ENCODE measurements at regions of chr19 and their contacts with region 1.

Region 1: GRCh38 chr19:37906869-37907734 is at the start of gene SIPA1L3:
- DNase-seq: peak; percentile 54
- H3K4me3 ChIP-seq: peak within 1 kb of the TSS; percentile 95
- CTCF ChIP-seq: no peak

Region 2: DNA sequence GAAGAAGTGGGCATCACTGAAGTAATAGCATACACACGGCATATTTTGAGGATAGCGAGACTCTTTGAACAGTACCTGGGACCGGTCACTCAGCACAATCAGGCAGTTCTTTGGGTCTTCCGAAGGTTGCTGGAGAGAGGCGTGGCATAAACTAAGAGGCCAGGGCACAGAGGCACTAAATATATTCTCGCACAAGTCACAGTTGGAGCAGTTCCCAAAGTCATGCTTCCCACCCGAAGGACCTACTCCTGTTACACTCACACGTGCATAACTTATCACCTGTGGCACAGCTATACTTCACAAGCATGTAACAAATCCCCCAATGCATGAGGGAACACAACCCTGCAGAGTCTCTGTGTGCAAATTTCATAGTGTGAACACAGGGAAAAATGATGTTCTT is 10.9 kb before region 1 on chr19:
- CTCF ChIA-PET with region 1: interaction called, 12 read pairs
- POLR2A ChIA-PET with region 1: no interaction called
- DNase-seq: no peak
- H3K4me3 ChIP-seq: no peak overlapping the region
- CTCF ChIP-seq: no peak

Region 3: DNA sequence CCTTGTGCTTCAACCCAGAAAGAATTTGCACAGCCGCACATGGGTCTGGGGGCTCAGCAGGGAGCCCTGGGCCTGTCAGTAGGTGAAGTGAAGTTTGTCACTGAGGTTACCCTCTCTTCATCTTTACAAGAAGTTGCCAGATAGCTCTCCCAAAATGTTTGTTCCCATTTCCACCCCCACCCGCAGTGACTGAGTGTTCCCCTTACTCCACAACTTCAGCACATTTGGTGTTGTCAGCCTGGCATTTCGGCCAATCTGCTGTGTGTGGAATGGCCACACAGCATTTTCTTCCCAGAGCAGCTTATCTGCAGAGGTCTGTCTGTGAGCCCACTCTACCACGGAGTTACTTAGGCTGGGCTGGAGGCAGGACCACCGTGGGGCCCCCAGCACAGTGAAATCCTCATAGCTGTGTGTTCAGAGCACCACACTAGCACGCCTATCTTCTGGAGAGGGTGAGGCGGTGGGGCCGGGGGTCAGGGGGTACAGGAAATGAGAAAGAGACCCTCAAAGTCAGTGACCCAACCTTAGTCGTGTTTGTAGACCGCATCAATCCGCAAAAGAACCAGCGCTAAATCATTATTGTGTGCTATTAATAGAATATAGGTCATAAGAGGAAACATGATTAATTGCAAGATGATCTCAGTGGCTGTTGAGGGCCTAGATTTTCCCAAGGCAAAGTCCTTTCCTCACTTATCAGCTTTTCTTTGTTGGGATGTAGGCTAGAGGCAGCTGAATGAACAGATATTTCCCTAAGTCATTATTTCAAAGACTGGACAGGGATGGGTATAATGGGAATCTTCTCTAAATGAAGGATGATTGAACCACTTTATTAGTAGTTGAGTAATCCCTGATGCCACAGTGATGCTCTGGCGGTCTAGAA is 115.9 kb after region 1 on chr19:
- CTCF ChIA-PET with region 1: interaction called, 14 read pairs
- POLR2A ChIA-PET with region 1: no interaction called
- DNase-seq: no peak
- H3K4me3 ChIP-seq: no peak overlapping the region
- CTCF ChIP-seq: no peak

Region 4: DNA sequence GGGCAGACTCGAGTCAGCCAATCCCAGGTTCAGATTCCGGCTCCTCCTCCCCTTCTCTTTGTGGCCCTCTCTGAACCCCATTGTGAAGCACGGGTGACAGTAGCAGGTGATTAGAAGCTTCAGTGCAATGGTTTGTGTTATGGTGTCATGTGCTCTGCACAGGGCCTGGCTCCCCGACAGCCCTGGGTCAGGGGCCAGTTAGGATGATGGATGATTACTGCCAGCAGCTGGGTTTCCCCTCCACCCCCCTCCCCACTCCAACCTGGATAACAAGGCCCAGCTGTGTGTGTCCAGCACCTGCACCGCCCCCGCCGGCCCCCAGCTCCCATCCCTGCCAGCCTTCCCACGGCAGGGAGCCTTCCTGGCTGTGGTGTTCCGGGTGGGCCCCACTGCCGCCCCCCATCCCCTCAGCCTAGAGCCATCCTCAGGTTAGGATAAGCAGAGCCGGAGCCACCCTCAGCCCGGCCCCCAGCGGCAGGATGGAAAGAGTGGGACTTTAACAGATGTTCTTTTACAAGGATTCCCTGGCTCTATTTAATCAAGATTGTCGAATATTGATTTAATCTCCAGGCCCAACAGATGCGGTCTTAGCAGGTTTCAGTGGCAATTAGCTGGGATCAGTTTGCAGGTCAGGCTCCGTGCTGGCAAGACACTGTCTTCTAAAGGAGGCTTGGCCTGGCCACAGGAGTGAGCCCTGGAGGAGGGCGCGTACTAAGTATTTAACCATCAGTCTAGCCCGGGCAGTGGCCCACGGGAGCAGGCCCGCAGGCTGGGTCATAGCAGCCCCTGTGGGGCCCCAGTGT is 156.1 kb after region 1 on chr19:
- CTCF ChIA-PET with region 1: interaction called, 30 read pairs
- POLR2A ChIA-PET with region 1: no interaction called
- DNase-seq: no peak
- H3K4me3 ChIP-seq: no peak overlapping the region
- CTCF ChIP-seq: no peak

Region 5: GRCh38 chr19:38134540-38135149 is 227.5 kb after region 1 on chr19:
- CTCF ChIA-PET with region 1: interaction called, 72 read pairs
- POLR2A ChIA-PET with region 1: no interaction called
- DNase-seq: no peak
- H3K4me3 ChIP-seq: no peak overlapping the region
- CTCF ChIP-seq: peak; percentile 52

Region 6: GRCh38 chr19:38224014-38224862 is 317.1 kb after region 1 on chr19 and contains the start of gene DPF1:
- CTCF ChIA-PET with region 1: interaction called, 18 read pairs
- POLR2A ChIA-PET with region 1: no interaction called
- DNase-seq: no peak
- H3K4me3 ChIP-seq: peak within 1 kb of the TSS; percentile 70
- CTCF ChIP-seq: no peak